ENCODE measurements at regions of chr10 and their contacts with region 1.

Region 1: GRCh38 chr10:96292971-96293920 is 11.0 kb upstream of the DNTT start:
- DNase-seq: peak in 4 of 35 experiments; percentile 4 to 44 (median 16)
- ATAC-seq: peak in 2 of 4 experiments; percentile 60 to 68
- H3K4me3 ChIP-seq: no peak overlapping the region
- H3K4me3 Mint-ChIP-seq: no peak overlapping the region
- H3K27ac ChIP-seq: no peak overlapping the region
- H3K27ac Mint-ChIP-seq: peak overlapping the region in 1 of 2 donors; percentile 30
- H3K4me1 ChIP-seq: peaks cover 2 to 8% of the 10 kb centered on the region in 2 experiments
- H3K4me1 Mint-ChIP-seq: peaks cover 23 to 35% (median 27%) of the 10 kb centered on the region in 3 donors
- H3K27me3 ChIP-seq: peaks cover 0 to 4% of the 10 kb centered on the region in 2 experiments
- H3K27me3 Mint-ChIP-seq: peaks cover 0 to 13% of the 10 kb centered on the region in 2 donors

Region 2: GRCh38 chr10:95987685-95988426 is 305.4 kb before region 1 on chr10:
- CTCF ChIA-PET with region 1: no interaction called
- POLR2A ChIA-PET with region 1: no interaction called
- DNase-seq: no peak
- ATAC-seq: no peak
- H3K4me3 ChIP-seq: no peak overlapping the region
- H3K4me3 Mint-ChIP-seq: no peak overlapping the region
- H3K27ac ChIP-seq: no peak overlapping the region
- H3K27ac Mint-ChIP-seq: no peak overlapping the region
- H3K4me1 ChIP-seq: no peaks in the 10 kb centered on the region
- H3K4me1 Mint-ChIP-seq: no peaks in the 10 kb centered on the region
- H3K27me3 ChIP-seq: no peaks in the 10 kb centered on the region
- H3K27me3 Mint-ChIP-seq: peaks cover 4 to 9% of the 10 kb centered on the region in 2 donors

Region 3: DNA sequence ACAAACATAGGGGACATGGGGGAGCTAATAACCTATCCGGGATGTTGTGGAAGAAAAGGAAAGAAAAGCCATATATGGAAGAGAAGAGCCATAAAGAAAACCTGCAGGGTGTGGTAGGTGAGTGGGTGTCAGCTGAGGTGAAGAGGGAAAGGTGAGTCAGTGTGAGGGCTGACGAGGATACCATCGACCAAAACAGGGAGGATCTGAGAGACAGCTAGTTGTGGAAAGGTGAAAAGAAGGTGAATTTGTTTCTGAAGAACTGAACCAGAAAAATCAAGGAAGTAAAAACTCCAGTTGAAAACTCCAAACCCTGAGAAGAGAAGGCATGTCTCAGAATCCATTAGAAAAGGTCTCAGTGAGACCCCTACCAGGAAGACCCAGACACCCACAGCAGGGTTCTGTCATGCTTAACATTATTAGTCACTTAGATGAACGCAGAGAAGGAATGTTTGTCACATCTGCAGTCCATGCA is 26.0 kb before region 1 on chr10:
- CTCF ChIA-PET with region 1: no interaction called
- POLR2A ChIA-PET with region 1: no interaction called
- DNase-seq: no peak
- ATAC-seq: no peak
- H3K4me3 ChIP-seq: no peak overlapping the region
- H3K4me3 Mint-ChIP-seq: no peak overlapping the region
- H3K27ac ChIP-seq: no peak overlapping the region
- H3K27ac Mint-ChIP-seq: no peak overlapping the region
- H3K4me1 ChIP-seq: no peaks in the 10 kb centered on the region
- H3K4me1 Mint-ChIP-seq: no peaks in the 10 kb centered on the region
- H3K27me3 ChIP-seq: peaks cover 0 to 6% of the 10 kb centered on the region in 2 experiments
- H3K27me3 Mint-ChIP-seq: peaks cover 11 to 19% of the 10 kb centered on the region in 2 donors

Region 4: DNA sequence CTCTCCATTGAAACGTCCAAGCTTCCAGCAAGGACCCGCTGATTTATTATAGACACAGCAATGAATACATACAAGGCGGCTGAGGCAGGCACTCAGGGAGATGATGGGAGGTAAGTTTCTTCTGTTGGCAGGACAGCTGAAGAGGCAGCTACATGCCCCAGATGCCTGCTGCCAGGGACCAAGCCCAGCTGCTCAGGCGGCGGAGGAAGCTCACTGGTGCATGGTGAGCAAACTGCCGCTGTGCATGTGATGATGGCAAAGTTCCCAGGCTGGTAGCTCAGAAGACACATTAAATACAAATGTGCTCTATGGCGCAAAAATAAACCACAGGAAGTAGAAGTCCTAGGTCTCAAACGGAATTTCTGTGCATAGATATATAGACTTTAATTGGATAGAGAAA is 13.3 kb after region 1 on chr10:
- CTCF ChIA-PET with region 1: interaction called in 1 of 2 experiments, 13 read pairs
- POLR2A ChIA-PET with region 1: no interaction called
- DNase-seq: peak in 26 of 35 experiments; percentile 0 to 44 (median 13)
- ATAC-seq: peak; percentile 63 to 84 (median 78)
- H3K4me3 ChIP-seq: no peak overlapping the region
- H3K4me3 Mint-ChIP-seq: peak overlapping the region in 2 of 3 donors; percentile 11 to 64
- H3K27ac ChIP-seq: no peak overlapping the region
- H3K27ac Mint-ChIP-seq: peak overlapping the region in 1 of 2 donors; percentile 74
- H3K4me1 ChIP-seq: no peaks in the 10 kb centered on the region
- H3K4me1 Mint-ChIP-seq: peaks cover 20 to 36% (median 23%) of the 10 kb centered on the region in 3 donors
- H3K27me3 ChIP-seq: peaks cover 0 to 9% of the 10 kb centered on the region in 2 experiments
- H3K27me3 Mint-ChIP-seq: peaks cover 3 to 44% of the 10 kb centered on the region in 2 donors